ENCODE measurements at regions of chr17 and their contacts with region 1.

Region 1: DNA sequence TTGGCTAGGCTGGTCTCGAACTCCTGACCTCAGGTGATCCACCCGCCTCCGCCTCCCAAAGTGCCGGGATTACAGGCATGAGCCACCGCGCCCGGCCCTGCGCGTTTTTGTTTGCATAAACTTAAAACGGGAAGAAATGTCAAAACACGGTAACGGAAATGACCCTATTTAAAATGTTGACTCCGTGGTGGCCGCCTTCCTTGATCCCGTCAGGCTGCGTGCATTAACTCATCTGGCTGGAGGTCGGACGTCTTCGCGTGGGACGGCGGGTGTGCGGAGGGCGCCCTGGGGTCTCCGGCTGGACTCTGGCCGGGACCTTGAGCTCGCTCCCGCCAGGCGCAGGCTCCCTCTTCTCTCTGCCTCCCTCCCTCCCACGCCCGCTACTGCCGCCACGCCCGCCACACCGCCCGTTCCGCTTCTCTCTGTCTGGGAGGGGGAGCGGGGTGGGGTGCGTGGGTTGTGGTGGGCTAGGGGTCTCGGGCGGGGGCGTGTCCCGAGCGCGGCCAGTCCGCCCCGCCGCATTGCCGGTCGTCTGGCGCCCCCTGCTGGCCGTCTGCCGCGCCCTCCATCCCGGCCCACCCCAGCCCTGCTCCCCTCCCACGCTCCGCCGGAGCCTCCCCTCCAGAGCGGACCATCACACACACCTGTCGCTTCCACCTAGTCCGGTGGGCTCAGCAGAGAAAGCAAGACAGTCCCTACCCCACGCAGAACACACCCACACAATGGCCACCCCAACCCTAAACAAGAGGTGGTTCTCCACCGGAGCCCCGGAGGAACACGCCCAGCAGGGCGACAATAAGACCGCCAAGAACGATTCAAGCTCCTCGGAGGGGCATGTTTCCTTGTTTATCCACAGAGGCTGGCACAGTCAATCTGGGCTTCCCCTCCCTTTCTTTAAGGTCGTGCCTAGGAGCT is 1.2 kb upstream of the CCDC42 start:
- DNase-seq: peak; percentile 94
- H3K4me3 ChIP-seq: peak overlapping the region; percentile 47 to 87 (median 70)
- H3K27ac ChIP-seq: peak overlapping the region; percentile 64 to 91 (median 84)
- H3K4me1 ChIP-seq: peaks cover 0 to 24% (median 14%) of the 10 kb centered on the region in 6 donors
- H3K27me3 ChIP-seq: peaks cover 0 to 30% (median 0%) of the 10 kb centered on the region in 7 donors
- CTCF ChIP-seq: peak; percentile 81 to 99 (median 95)
- POLR2A ChIP-seq: no peak

Region 2: GRCh38 chr17:8409966-8410864 is 335.6 kb before region 1 on chr17:
- intact Hi-C with region 1: loop called (anchors 5 kb)
- DNase-seq: peak; percentile 93
- H3K4me3 ChIP-seq: peak overlapping the region in 1 of 8 donors; percentile 25
- H3K27ac ChIP-seq: peak overlapping the region in 3 of 8 donors; percentile 14 to 91 (median 41)
- H3K4me1 ChIP-seq: peaks cover 0 to 11% (median 9%) of the 10 kb centered on the region in 6 donors
- H3K27me3 ChIP-seq: peaks cover 0 to 46% (median 3%) of the 10 kb centered on the region in 7 donors
- CTCF ChIP-seq: peak; percentile 78 to 93 (median 87)
- POLR2A ChIP-seq: no peak

Region 3: GRCh38 chr17:8572764-8573163 is 173.1 kb before region 1 on chr17:
- intact Hi-C with region 1: loop called (anchors 5 kb)
- DNase-seq: no peak
- H3K4me3 ChIP-seq: no peak overlapping the region
- H3K27ac ChIP-seq: no peak overlapping the region
- H3K4me1 ChIP-seq: no peaks in the 10 kb centered on the region
- H3K27me3 ChIP-seq: peaks cover 0 to 5% (median 0%) of the 10 kb centered on the region in 7 donors
- CTCF ChIP-seq: peak in 1 of 11 experiments; percentile 19
- POLR2A ChIP-seq: no peak

Measured in spleen (tissue), 13 donors.